Activated CD4-positive, alpha-beta memory T cell treated with anti-CD3 and anti-CD28 coated beads for 36 hours (primary cell): ENCODE measurements at regions of chr13 and their contacts with region 1.

Region 1: DNA sequence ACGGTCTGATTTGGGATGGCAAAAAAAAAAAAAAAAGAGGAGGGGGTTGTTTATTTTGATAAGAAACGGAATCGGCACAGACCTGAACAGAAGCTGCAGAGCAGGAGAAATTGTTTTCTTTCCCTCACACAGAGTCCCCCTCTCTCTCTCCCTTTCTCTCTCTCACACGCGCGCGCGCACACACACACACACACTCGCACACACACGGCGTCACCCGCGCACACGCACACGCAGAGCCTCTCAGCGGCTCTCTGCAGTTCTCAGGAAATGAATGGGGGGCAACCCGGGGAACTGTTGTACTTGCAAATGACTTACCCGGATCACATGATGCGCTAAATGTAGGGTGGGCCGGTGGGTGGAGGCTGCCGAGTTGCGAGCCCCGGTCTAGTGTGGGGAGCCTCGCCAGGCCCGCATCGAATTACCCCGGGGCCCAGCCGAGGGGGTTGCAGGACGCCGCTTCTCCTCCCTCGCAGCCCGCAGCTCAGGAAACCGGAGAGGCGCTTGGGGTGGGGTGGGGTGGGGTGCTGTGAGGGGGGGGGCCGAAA is 475 bp downstream of the KLF12 start:
- DNase-seq: peak; percentile 91
- H3K4me3 Mint-ChIP-seq: peak overlapping the region; percentile 100
- H3K27ac Mint-ChIP-seq: peak overlapping the region; percentile 100
- H3K4me1 Mint-ChIP-seq: peaks cover 30% of the 10 kb centered on the region
- H3K27me3 Mint-ChIP-seq: peaks cover 1% of the 10 kb centered on the region

Region 2: GRCh38 chr13:72727417-72728289 is 1406.1 kb before region 1 on chr13 and contains the starts of genes BORA and MZT1:
- CTCF ChIA-PET with region 1: no interaction called
- POLR2A ChIA-PET with region 1: no interaction called
- intact Hi-C with region 1: loop called (anchors 5 kb)
- DNase-seq: peak; percentile 98
- H3K4me3 Mint-ChIP-seq: peak within 1 kb of the TSS; percentile 93
- H3K27ac Mint-ChIP-seq: peak within 1 kb of the TSS; percentile 76
- H3K4me1 Mint-ChIP-seq: peaks cover 41% of the 10 kb centered on the region
- H3K27me3 Mint-ChIP-seq: peaks cover 2% of the 10 kb centered on the region
- total RNA-seq, gene BORA: 18.4 to 19.1 TPM
- total RNA-seq, gene MZT1: 27.6 to 28.6 TPM

Region 3: GRCh38 chr13:73715114-73715910 is 418.4 kb before region 1 on chr13:
- CTCF ChIA-PET with region 1: no interaction called
- POLR2A ChIA-PET with region 1: no interaction called
- intact Hi-C with region 1: loop called (anchors 1 kb)
- DNase-seq: peak; percentile 77
- H3K4me3 Mint-ChIP-seq: peak overlapping the region; percentile 33
- H3K27ac Mint-ChIP-seq: peak overlapping the region; percentile 75
- H3K4me1 Mint-ChIP-seq: peaks cover 54% of the 10 kb centered on the region
- H3K27me3 Mint-ChIP-seq: no peaks in the 10 kb centered on the region

Region 4: DNA sequence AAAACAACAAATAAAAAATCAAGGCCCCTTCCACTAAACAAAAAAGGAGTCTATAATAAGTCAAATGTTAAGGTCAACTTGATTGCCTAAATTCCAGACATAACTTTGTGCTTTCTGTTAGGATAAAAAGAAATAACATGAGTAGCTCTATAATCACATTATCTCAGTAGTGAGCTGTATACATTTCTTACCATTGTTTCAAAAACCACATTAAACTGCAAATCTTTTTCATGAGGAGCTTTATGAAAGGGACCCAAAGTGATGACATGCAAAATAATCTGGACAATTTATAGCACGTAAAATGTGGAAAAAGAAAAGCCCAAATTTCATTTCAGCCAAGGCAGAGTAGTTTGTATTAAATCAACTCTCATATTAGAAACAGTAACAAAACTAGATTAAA is 268.7 kb before region 1 on chr13:
- CTCF ChIA-PET with region 1: no interaction called
- POLR2A ChIA-PET with region 1: no interaction called
- intact Hi-C with region 1: loop called (anchors 2 kb)
- DNase-seq: no peak
- H3K4me3 Mint-ChIP-seq: no peak overlapping the region
- H3K27ac Mint-ChIP-seq: no peak overlapping the region
- H3K4me1 Mint-ChIP-seq: peaks cover 54% of the 10 kb centered on the region
- H3K27me3 Mint-ChIP-seq: no peaks in the 10 kb centered on the region

Region 5: DNA sequence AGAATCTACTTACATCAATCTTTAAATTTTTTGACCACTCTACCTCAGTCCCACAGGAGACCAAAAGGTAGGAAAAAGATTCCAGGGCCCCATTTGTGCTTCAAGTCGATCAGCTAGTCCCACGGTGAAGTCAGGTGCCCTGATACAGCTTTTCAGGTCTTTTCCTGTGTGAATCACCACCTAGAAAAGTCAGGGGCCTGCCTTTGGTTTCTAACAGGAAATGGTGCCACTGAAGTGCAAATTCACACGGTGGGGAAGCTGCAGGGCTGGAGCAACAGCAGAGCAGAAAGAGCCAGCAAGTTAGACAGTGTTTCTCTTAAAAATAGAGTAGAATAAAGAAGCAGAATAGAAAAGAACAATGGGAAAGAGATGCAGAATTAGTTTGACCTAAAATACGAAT is 107.0 kb before region 1 on chr13:
- CTCF ChIA-PET with region 1: no interaction called
- POLR2A ChIA-PET with region 1: interaction called, 3 read pairs
- intact Hi-C with region 1: loop called (anchors 1 kb)
- DNase-seq: peak; percentile 79
- H3K4me3 Mint-ChIP-seq: peak overlapping the region; percentile 65
- H3K27ac Mint-ChIP-seq: peak overlapping the region; percentile 71
- H3K4me1 Mint-ChIP-seq: peaks cover 78% of the 10 kb centered on the region
- H3K27me3 Mint-ChIP-seq: no peaks in the 10 kb centered on the region

Region 6: GRCh38 chr13:74098077-74098476 is 35.7 kb before region 1 on chr13:
- CTCF ChIA-PET with region 1: no interaction called
- POLR2A ChIA-PET with region 1: no interaction called
- intact Hi-C with region 1: no loop called
- DNase-seq: no peak
- H3K4me3 Mint-ChIP-seq: no peak overlapping the region
- H3K27ac Mint-ChIP-seq: no peak overlapping the region
- H3K4me1 Mint-ChIP-seq: peaks cover 60% of the 10 kb centered on the region
- H3K27me3 Mint-ChIP-seq: no peaks in the 10 kb centered on the region

Region 7: GRCh38 chr13:74217811-74218210 is 84.1 kb after region 1 on chr13:
- CTCF ChIA-PET with region 1: no interaction called
- POLR2A ChIA-PET with region 1: no interaction called
- intact Hi-C with region 1: no loop called
- DNase-seq: no peak
- H3K4me3 Mint-ChIP-seq: no peak overlapping the region
- H3K27ac Mint-ChIP-seq: no peak overlapping the region
- H3K4me1 Mint-ChIP-seq: peaks cover 9% of the 10 kb centered on the region
- H3K27me3 Mint-ChIP-seq: no peaks in the 10 kb centered on the region

Region 8: DNA sequence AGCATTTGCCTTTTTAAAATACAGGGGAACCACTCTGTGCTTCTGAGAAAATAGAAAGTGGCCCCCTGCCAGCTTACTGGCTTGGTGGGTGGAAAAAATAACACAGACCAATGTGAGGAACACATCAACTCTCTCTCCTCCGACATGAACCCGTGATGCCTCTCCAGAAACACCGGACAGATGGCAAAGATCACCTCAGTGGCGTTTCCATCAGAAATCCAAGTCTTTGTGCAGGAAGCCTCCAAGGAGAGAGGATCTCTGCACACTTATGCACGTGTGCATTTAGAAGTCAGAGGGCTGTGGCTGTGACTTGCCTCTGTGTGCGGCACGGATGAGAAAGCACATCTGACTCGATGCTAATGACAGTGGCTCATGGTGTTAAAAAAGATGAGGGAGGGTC is 112.8 kb after region 1 on chr13:
- CTCF ChIA-PET with region 1: no interaction called
- POLR2A ChIA-PET with region 1: interaction called, 3 read pairs
- intact Hi-C with region 1: loop called (anchors 1 kb)
- DNase-seq: peak; percentile 47
- H3K4me3 Mint-ChIP-seq: peak overlapping the region; percentile 58
- H3K27ac Mint-ChIP-seq: peak overlapping the region; percentile 40
- H3K4me1 Mint-ChIP-seq: peaks cover 95% of the 10 kb centered on the region
- H3K27me3 Mint-ChIP-seq: no peaks in the 10 kb centered on the region

Region 9: DNA sequence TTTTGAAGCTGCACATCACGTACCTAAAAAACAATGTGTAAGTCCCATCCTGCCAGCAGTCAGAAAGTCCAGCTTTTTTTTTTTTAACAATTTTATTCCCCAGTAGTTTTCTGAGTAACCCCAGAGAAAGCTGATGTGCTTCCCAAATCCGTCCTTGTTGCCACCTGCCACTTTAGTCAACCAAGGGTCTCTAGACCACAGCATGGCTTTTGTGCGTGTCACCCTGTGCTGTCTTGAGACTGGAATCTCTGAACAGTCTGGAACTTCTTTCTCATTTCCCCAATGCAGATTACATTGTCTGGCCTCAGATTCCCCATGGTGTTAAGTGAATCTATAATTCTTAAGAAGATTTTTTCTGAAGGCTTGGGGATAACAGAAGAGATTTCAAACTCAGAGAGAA is 289.7 kb after region 1 on chr13:
- CTCF ChIA-PET with region 1: no interaction called
- POLR2A ChIA-PET with region 1: no interaction called
- intact Hi-C with region 1: no loop called
- DNase-seq: no peak
- H3K4me3 Mint-ChIP-seq: no peak overlapping the region
- H3K27ac Mint-ChIP-seq: no peak overlapping the region
- H3K4me1 Mint-ChIP-seq: peaks cover 2% of the 10 kb centered on the region
- H3K27me3 Mint-ChIP-seq: no peaks in the 10 kb centered on the region

Region 10: DNA sequence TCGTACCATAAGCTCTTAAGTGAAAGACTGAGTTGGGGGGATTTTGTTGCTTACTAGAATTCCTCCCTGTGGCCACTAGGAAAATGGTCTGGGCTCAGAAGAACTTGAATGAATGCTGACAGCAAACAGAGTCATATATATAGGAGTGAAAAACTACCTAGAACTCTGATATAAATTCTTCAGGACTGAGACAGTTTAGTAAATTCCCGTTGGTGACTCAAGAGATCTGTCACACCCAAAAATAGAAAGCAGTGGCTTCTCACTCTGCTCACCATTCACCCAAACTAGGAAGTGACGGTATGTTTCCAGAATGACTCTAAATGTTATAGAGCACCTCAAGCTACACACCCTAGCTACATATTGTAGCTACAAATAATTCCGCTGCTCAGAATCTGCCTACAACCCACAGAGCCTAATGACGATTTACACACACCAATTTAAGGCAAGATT is 1232.0 kb after region 1 on chr13:
- CTCF ChIA-PET with region 1: no interaction called
- POLR2A ChIA-PET with region 1: no interaction called
- intact Hi-C with region 1: loop called (anchors 10 kb)
- DNase-seq: peak; percentile 36
- H3K4me3 Mint-ChIP-seq: peak overlapping the region; percentile 34
- H3K27ac Mint-ChIP-seq: peak overlapping the region; percentile 76
- H3K4me1 Mint-ChIP-seq: peaks cover 36% of the 10 kb centered on the region
- H3K27me3 Mint-ChIP-seq: peaks cover 3% of the 10 kb centered on the region